Naive thymus-derived CD8-positive, alpha-beta T cell (primary cell): ENCODE measurements at regions of chr19 and their contacts with region 1.

Region 1: GRCh38 chr19:14031719-14032480 is at the start of gene IL27RA:
- DNase-seq: peak; percentile 63 to 95 (median 85)
- ATAC-seq: peak; percentile 78 to 81
- H3K4me3 Mint-ChIP-seq: peak within 1 kb of the TSS; percentile 92 to 98 (median 96)
- H3K27ac Mint-ChIP-seq: peak within 1 kb of the TSS; percentile 90 to 98 (median 97)
- H3K4me1 Mint-ChIP-seq: peaks cover 20 to 50% (median 40%) of the 10 kb centered on the region in 4 donors
- H3K27me3 Mint-ChIP-seq: no peaks in the 10 kb centered on the region
- polyA plus RNA-seq, gene IL27RA: 54.5 to 91.2 (median 83.9) TPM

Region 2: GRCh38 chr19:13952154-13953035 is 79.5 kb before region 1 on chr19 and contains the start of gene DCAF15:
- POLR2A ChIA-PET with region 1: interaction called, 65 read pairs
- DNase-seq: peak; percentile 93 to 100 (median 99)
- ATAC-seq: peak; percentile 96 to 97
- H3K4me3 Mint-ChIP-seq: peak within 1 kb of the TSS; percentile 88 to 99 (median 93)
- H3K27ac Mint-ChIP-seq: peak within 1 kb of the TSS; percentile 88 to 98 (median 96)
- H3K4me1 Mint-ChIP-seq: peaks cover 7 to 28% (median 25%) of the 10 kb centered on the region in 4 donors
- H3K27me3 Mint-ChIP-seq: no peaks in the 10 kb centered on the region
- polyA plus RNA-seq, gene DCAF15: 2.9 to 6.0 (median 3.4) TPM

Region 3: DNA sequence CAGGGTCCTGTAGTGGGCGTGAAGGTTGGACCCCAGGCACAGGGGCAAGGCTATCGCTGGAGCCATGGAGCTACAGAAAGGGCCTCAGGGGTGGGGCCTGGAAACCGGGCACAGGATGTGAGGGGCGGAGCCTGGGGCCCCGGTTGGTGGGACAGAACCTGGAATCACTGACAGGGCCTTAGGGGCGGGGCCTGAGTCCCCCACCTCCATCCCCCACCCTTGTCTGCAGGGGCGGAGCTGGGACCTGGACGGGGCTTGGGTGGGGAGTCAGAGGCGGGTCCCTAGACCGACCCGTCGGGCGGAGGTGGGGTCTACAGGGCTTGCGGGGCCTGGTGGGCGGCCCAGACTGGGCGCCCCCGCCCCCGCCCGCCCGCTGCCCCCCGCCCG is 53.6 kb before region 1 on chr19:
- POLR2A ChIA-PET with region 1: interaction called, 73 read pairs
- DNase-seq: peak in 5 of 10 donors; percentile 23 to 70 (median 32)
- ATAC-seq: peak in 1 of 2 donors; percentile 44
- H3K4me3 Mint-ChIP-seq: peak overlapping the region in 9 of 10 donors; percentile 26 to 77 (median 61)
- H3K27ac Mint-ChIP-seq: peak overlapping the region; percentile 8 to 93 (median 80)
- H3K4me1 Mint-ChIP-seq: peaks cover 17 to 62% (median 46%) of the 10 kb centered on the region in 4 donors
- H3K27me3 Mint-ChIP-seq: no peaks in the 10 kb centered on the region

Region 4: DNA sequence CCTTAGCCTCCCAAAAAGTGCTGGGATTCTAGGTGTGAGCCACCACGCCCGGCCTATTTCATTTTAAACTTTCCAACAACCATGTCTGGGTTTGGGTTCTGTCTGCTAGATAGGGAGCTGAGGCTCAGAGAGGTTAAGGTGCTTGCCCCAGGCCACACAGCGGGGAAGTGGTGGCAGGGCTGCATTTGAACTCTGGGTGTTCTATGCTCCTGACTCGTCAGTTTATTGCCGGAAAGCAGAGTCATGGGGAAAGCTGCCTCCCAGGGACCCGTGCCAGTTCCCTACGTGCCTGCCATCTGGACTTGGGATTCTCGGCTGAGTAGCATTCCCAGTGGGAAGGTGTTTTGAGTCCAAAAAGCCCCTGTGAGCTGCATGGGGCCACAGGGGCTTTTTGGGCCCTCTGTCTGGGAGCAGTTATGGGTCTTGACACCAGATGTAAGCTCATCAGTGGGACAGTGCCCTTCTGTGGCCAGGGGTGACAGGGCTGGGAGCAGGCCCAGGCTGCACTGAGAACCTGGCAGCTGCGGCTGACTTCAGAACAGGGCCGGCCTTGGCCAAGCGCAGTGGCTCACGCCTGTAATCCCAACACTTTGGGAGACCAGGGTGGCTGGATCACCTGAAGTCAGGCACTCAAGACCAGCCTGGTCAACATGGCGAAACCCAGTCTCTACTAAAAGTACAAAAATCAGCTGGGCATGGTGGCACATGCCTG is 36.7 kb before region 1 on chr19:
- POLR2A ChIA-PET with region 1: interaction called, 18 read pairs
- DNase-seq: no peak
- ATAC-seq: no peak
- H3K4me3 Mint-ChIP-seq: no peak overlapping the region
- H3K27ac Mint-ChIP-seq: peak overlapping the region in 5 of 10 donors; percentile 14 to 64 (median 29)
- H3K4me1 Mint-ChIP-seq: peaks cover 12 to 49% (median 33%) of the 10 kb centered on the region in 4 donors
- H3K27me3 Mint-ChIP-seq: no peaks in the 10 kb centered on the region

Region 5: DNA sequence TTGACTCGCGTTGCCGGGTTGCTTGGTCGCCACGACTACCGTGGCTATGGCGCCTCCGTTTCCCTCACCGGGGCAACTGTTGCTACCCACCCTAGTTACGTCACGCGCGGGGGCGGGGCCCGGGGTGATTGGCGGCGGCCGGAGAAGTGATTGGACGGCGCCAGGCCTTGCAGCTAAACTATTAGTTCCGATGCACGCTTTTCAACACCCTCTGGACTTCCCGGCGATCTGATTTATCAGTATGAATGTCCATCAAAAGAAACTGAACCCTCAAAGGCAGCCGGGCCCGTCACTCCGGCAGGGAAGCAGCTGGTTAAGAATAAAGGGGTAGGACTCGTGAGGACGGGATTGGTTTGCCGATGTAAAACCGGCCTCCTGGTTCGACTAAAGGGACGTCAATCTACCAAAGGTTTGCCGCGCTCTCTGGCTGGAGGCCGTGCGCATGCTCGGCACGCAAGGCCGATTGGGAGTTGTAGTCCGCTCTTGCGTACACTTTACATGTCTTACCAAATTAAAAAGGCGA is 25.6 kb before region 1 on chr19 and contains the start of gene RFX1:
- POLR2A ChIA-PET with region 1: interaction called, 143 read pairs
- DNase-seq: peak; percentile 99 to 100 (median 100)
- ATAC-seq: peak; percentile 74 to 76
- H3K4me3 Mint-ChIP-seq: peak within 1 kb of the TSS; percentile 81 to 98 (median 91)
- H3K27ac Mint-ChIP-seq: peak within 1 kb of the TSS; percentile 95 to 100 (median 99)
- H3K4me1 Mint-ChIP-seq: peaks cover 18 to 49% (median 45%) of the 10 kb centered on the region in 4 donors
- H3K27me3 Mint-ChIP-seq: peaks cover 0 to 2% (median 0%) of the 10 kb centered on the region in 5 donors
- polyA plus RNA-seq, gene RFX1: 0.84 to 1.1 (median 1.0) TPM

Region 6: GRCh38 chr19:14081325-14082093 is 49.6 kb after region 1 on chr19:
- POLR2A ChIA-PET with region 1: interaction called, 14 read pairs
- DNase-seq: peak; percentile 96 to 100 (median 99)
- ATAC-seq: peak; percentile 93 to 96
- H3K4me3 Mint-ChIP-seq: peak overlapping the region; percentile 84 to 98 (median 95)
- H3K27ac Mint-ChIP-seq: peak overlapping the region; percentile 74 to 99 (median 97)
- H3K4me1 Mint-ChIP-seq: peaks cover 8 to 29% (median 19%) of the 10 kb centered on the region in 4 donors
- H3K27me3 Mint-ChIP-seq: no peaks in the 10 kb centered on the region

Region 7: GRCh38 chr19:14122924-14123323 is 91.0 kb after region 1 on chr19:
- POLR2A ChIA-PET with region 1: no interaction called
- DNase-seq: no peak
- ATAC-seq: no peak
- H3K4me3 Mint-ChIP-seq: no peak overlapping the region
- H3K27ac Mint-ChIP-seq: peak overlapping the region in 1 of 10 donors; percentile 60
- H3K4me1 Mint-ChIP-seq: peaks cover 6 to 13% (median 11%) of the 10 kb centered on the region in 4 donors
- H3K27me3 Mint-ChIP-seq: no peaks in the 10 kb centered on the region